CD4-positive, alpha-beta memory T cell (primary cell): ENCODE measurements at regions of chr13 and their contacts with region 1.

Region 1: DNA sequence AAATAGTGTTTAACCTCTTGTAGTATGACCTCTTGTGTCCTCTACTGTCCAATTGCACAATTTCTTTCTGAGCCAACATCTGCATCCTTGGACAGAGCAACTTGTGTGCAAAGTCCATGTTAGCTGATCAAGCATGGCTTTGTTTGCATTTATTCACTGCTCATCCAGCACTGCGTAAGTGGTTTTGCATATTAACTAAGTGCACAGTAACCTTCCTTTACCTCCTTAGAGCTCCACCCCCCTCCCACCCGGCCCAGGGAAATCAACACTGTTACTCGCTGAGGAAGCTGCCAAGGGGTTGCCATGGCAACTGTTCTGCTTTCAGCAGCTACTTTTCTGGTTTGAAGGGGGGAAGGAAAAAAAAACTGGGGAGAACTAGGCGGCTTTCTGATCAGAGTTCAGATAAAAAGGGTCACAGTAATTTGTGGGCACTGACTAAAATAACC is 153.5 kb upstream of the KLF12 start:
- DNase-seq: peak; percentile 87 to 98 (median 93)
- H3K4me3 ChIP-seq: peak overlapping the region; percentile 1 to 5
- H3K4me3 Mint-ChIP-seq: peak overlapping the region; percentile 75 to 89 (median 84)
- H3K27ac ChIP-seq: peak overlapping the region; percentile 56
- H3K27ac Mint-ChIP-seq: peak overlapping the region; percentile 94 to 98 (median 97)
- H3K4me1 ChIP-seq: peaks cover 53% of the 10 kb centered on the region
- H3K4me1 Mint-ChIP-seq: peaks cover 50 to 72% (median 60%) of the 10 kb centered on the region in 4 donors
- H3K27me3 ChIP-seq: no peaks in the 10 kb centered on the region
- H3K27me3 Mint-ChIP-seq: peaks cover 0 to 3% of the 10 kb centered on the region in 2 donors

Region 2: DNA sequence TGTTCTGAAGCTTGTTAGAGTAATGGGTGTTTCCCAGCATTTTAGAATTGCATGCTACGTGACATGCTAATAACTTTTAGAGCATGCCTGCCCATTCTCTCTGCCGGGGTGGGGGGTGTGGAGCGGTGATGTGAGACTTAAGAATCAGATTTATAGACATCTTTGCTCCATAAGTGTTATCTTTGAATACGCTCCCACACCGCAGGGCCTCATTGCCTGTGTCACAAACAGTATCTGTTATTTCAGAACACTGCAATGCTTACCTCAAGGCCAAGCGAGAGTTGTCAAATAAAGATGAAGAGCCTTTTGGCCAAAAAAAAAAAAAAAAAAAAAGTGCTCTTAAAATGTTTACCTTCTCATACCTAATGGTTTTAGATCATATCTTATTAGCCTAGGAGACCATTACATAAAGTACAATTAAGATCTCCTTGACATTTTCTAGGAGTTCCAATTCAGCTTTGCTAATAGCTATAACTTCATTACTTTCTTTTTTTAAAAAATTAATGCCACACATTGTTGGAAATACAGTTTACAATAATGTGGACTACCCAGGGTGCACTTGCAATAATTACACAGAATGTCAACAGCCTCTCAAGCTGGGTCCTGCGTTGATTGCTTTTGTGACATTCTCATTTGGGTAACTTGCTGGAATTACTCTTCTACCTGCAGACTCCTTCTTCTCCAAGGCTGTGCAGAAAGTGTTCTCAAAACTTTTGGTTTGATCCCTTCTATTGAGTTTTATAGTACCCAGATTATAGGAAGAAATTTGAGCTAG is 678.8 kb before region 1 on chr13:
- CTCF ChIA-PET with region 1: no interaction called
- POLR2A ChIA-PET with region 1: no interaction called
- intact Hi-C with region 1: no loop called
- DNase-seq: no peak
- H3K4me3 ChIP-seq: no peak overlapping the region
- H3K4me3 Mint-ChIP-seq: no peak overlapping the region
- H3K27ac ChIP-seq: no peak overlapping the region
- H3K27ac Mint-ChIP-seq: no peak overlapping the region
- H3K4me1 ChIP-seq: no peaks in the 10 kb centered on the region
- H3K4me1 Mint-ChIP-seq: peaks cover 0 to 4% (median 2%) of the 10 kb centered on the region in 4 donors
- H3K27me3 ChIP-seq: no peaks in the 10 kb centered on the region
- H3K27me3 Mint-ChIP-seq: no peaks in the 10 kb centered on the region

Region 3: GRCh38 chr13:73754727-73755292 is 532.9 kb before region 1 on chr13:
- CTCF ChIA-PET with region 1: interaction called, 30 read pairs
- POLR2A ChIA-PET with region 1: interaction called, 7 read pairs
- intact Hi-C with region 1: loop called (anchors 1 kb)
- DNase-seq: peak in 4 of 5 donors; percentile 42 to 61 (median 50)
- H3K4me3 ChIP-seq: no peak overlapping the region
- H3K4me3 Mint-ChIP-seq: no peak overlapping the region
- H3K27ac ChIP-seq: no peak overlapping the region
- H3K27ac Mint-ChIP-seq: peak overlapping the region in 6 of 7 donors; percentile 8 to 84 (median 56)
- H3K4me1 ChIP-seq: peaks cover 43% of the 10 kb centered on the region
- H3K4me1 Mint-ChIP-seq: peaks cover 36 to 58% (median 49%) of the 10 kb centered on the region in 4 donors
- H3K27me3 ChIP-seq: no peaks in the 10 kb centered on the region
- H3K27me3 Mint-ChIP-seq: no peaks in the 10 kb centered on the region

Region 4: GRCh38 chr13:73849292-73849691 is 438.5 kb before region 1 on chr13:
- CTCF ChIA-PET with region 1: interaction called, 59 read pairs
- POLR2A ChIA-PET with region 1: interaction called, 7 read pairs
- intact Hi-C with region 1: no loop called
- DNase-seq: peak in 2 of 5 donors; percentile 20 to 29
- H3K4me3 ChIP-seq: no peak overlapping the region
- H3K4me3 Mint-ChIP-seq: peak overlapping the region in 5 of 8 donors; percentile 1 to 52 (median 10)
- H3K27ac ChIP-seq: no peak overlapping the region
- H3K27ac Mint-ChIP-seq: peak overlapping the region in 5 of 7 donors; percentile 6 to 62 (median 52)
- H3K4me1 ChIP-seq: peaks cover 33% of the 10 kb centered on the region
- H3K4me1 Mint-ChIP-seq: peaks cover 31 to 59% (median 48%) of the 10 kb centered on the region in 4 donors
- H3K27me3 ChIP-seq: no peaks in the 10 kb centered on the region
- H3K27me3 Mint-ChIP-seq: no peaks in the 10 kb centered on the region

Region 5: GRCh38 chr13:73984949-73985691 is 302.6 kb before region 1 on chr13:
- CTCF ChIA-PET with region 1: interaction called, 42 read pairs
- POLR2A ChIA-PET with region 1: interaction called, 23 read pairs
- intact Hi-C with region 1: loop called (anchors 1 kb)
- DNase-seq: peak; percentile 74 to 90 (median 82)
- H3K4me3 ChIP-seq: peak overlapping the region; percentile 34 to 46
- H3K4me3 Mint-ChIP-seq: peak overlapping the region; percentile 65 to 89 (median 80)
- H3K27ac ChIP-seq: peak overlapping the region; percentile 42
- H3K27ac Mint-ChIP-seq: peak overlapping the region in 4 of 7 donors; percentile 93 to 95 (median 94)
- H3K4me1 ChIP-seq: peaks cover 76% of the 10 kb centered on the region
- H3K4me1 Mint-ChIP-seq: peaks cover 35 to 50% (median 47%) of the 10 kb centered on the region in 4 donors
- H3K27me3 ChIP-seq: no peaks in the 10 kb centered on the region
- H3K27me3 Mint-ChIP-seq: no peaks in the 10 kb centered on the region

Region 6: DNA sequence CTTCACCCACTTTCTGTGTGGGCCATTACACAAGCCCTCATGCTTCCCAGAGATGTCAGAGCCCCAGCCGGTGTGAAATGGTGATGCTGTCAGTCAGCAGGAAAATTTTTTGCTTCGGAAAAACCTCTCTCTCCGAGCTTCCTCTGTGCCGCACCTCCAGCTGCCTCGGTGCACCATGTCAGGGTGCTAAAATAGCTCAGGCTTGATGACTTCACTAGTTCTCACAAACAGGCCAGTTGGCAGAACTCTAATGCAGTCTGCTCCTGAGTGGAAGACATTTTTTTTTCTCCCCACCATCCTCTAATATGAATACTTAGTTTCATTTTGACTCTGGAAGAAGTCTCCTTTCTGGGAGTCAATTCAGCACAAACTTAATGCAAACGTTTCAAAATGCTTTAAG is 224.8 kb before region 1 on chr13:
- CTCF ChIA-PET with region 1: interaction called, 32 read pairs
- POLR2A ChIA-PET with region 1: interaction called, 40 read pairs
- intact Hi-C with region 1: loop called (anchors 2 kb)
- DNase-seq: peak in 1 of 5 donors; percentile 70
- H3K4me3 ChIP-seq: peak overlapping the region in 1 of 2 donors; percentile 7
- H3K4me3 Mint-ChIP-seq: peak overlapping the region; percentile 57 to 93 (median 83)
- H3K27ac ChIP-seq: peak overlapping the region; percentile 48
- H3K27ac Mint-ChIP-seq: peak overlapping the region; percentile 81 to 98 (median 93)
- H3K4me1 ChIP-seq: peaks cover 93% of the 10 kb centered on the region
- H3K4me1 Mint-ChIP-seq: peaks cover 59 to 93% (median 86%) of the 10 kb centered on the region in 4 donors
- H3K27me3 ChIP-seq: no peaks in the 10 kb centered on the region
- H3K27me3 Mint-ChIP-seq: no peaks in the 10 kb centered on the region

Region 7: GRCh38 chr13:74191410-74191809 is 96.3 kb before region 1 on chr13:
- CTCF ChIA-PET with region 1: interaction called, 15 read pairs
- POLR2A ChIA-PET with region 1: interaction called, 8 read pairs
- intact Hi-C with region 1: no loop called
- DNase-seq: no peak
- H3K4me3 ChIP-seq: no peak overlapping the region
- H3K4me3 Mint-ChIP-seq: no peak overlapping the region
- H3K27ac ChIP-seq: no peak overlapping the region
- H3K27ac Mint-ChIP-seq: no peak overlapping the region
- H3K4me1 ChIP-seq: peaks cover 12% of the 10 kb centered on the region
- H3K4me1 Mint-ChIP-seq: peaks cover 17 to 28% (median 19%) of the 10 kb centered on the region in 4 donors
- H3K27me3 ChIP-seq: no peaks in the 10 kb centered on the region
- H3K27me3 Mint-ChIP-seq: no peaks in the 10 kb centered on the region

Region 8: GRCh38 chr13:74270018-74270417 is 17.7 kb before region 1 on chr13:
- CTCF ChIA-PET with region 1: interaction called, 21 read pairs
- POLR2A ChIA-PET with region 1: interaction called, 4 read pairs
- intact Hi-C with region 1: no loop called
- DNase-seq: no peak
- H3K4me3 ChIP-seq: no peak overlapping the region
- H3K4me3 Mint-ChIP-seq: no peak overlapping the region
- H3K27ac ChIP-seq: no peak overlapping the region
- H3K27ac Mint-ChIP-seq: peak overlapping the region in 2 of 7 donors; percentile 32 to 53
- H3K4me1 ChIP-seq: peaks cover 25% of the 10 kb centered on the region
- H3K4me1 Mint-ChIP-seq: peaks cover 18 to 39% (median 24%) of the 10 kb centered on the region in 4 donors
- H3K27me3 ChIP-seq: no peaks in the 10 kb centered on the region
- H3K27me3 Mint-ChIP-seq: no peaks in the 10 kb centered on the region

Region 9: DNA sequence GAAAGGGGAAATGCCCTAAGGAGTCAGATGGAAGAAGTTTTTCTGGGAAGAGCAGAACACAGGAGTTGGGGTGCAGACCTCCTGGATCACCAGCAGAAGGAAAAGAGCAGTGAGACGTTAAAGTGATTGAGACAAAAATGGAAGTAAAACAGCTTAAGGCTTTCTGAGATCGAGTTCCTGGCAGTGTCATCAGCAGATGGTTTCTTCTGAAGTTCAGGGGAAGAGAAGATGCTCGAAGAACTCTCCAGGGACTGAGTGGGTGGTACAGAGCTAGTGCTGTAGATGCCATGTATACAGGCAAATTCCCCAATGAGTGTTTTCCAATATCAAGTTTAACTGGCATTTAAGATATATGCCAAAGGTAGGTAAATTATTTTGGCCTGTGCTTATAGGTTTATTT is 118.7 kb after region 1 on chr13:
- CTCF ChIA-PET with region 1: no interaction called
- POLR2A ChIA-PET with region 1: no interaction called
- intact Hi-C with region 1: no loop called
- DNase-seq: no peak
- H3K4me3 ChIP-seq: no peak overlapping the region
- H3K4me3 Mint-ChIP-seq: no peak overlapping the region
- H3K27ac ChIP-seq: no peak overlapping the region
- H3K27ac Mint-ChIP-seq: no peak overlapping the region
- H3K4me1 ChIP-seq: no peaks in the 10 kb centered on the region
- H3K4me1 Mint-ChIP-seq: peaks cover 0 to 4% (median 2%) of the 10 kb centered on the region in 4 donors
- H3K27me3 ChIP-seq: no peaks in the 10 kb centered on the region
- H3K27me3 Mint-ChIP-seq: no peaks in the 10 kb centered on the region

Region 10: GRCh38 chr13:74586847-74587246 is 299.1 kb after region 1 on chr13:
- CTCF ChIA-PET with region 1: no interaction called
- POLR2A ChIA-PET with region 1: no interaction called
- intact Hi-C with region 1: no loop called
- DNase-seq: no peak
- H3K4me3 ChIP-seq: no peak overlapping the region
- H3K4me3 Mint-ChIP-seq: no peak overlapping the region
- H3K27ac ChIP-seq: no peak overlapping the region
- H3K27ac Mint-ChIP-seq: no peak overlapping the region
- H3K4me1 ChIP-seq: no peaks in the 10 kb centered on the region
- H3K4me1 Mint-ChIP-seq: no peaks in the 10 kb centered on the region
- H3K27me3 ChIP-seq: no peaks in the 10 kb centered on the region
- H3K27me3 Mint-ChIP-seq: peaks cover 5 to 16% of the 10 kb centered on the region in 2 donors